B cell (primary cell): ENCODE measurements at regions of chr12 and their contacts with region 1.

Region 1: DNA sequence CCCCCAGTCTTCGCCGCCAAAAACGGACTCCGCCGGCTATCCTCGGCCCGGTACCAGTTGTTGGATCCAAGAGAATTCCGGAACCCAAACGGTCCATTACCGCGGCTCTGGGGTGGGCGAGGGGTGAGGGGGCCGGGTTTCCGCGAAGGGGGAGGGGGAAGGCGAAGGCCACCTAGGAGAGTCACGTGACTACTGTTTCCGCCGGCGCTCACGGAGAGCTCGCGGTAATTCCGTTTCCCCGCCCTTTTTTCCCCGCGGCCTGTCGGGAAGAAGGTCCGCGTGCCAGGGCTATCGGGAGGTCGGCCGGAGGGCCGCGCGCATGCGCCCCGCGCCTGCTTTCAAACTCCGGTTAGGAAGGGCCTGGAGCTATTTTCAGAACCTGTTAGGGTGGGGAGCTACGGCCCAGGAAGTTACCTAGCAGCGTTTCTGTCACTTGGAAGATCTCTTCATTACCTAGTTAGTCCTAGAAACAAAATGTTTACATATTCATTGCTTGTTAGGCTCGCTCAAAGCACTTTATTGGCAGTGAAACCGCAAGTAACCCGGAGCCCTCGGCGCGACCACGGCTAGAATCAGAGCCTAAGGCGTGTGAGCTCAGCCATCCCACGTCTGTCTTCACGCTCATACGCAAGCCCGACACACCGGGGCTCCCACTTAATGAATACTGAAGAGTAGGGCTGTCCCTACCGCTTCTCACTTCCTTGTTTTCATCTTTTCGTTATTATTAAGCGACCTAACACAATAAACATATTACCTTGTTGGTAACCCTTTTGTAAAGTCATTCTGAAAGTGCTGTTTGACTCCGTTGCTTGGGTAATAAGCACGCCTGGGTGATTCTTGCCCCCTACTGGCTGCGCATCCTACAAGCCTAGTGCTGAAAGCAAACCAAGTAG is 624 bp upstream of the SBNO1 start:
- DNase-seq: peak; percentile 99
- ATAC-seq: peak; percentile 70
- H3K4me3 ChIP-seq: peak overlapping the region; percentile 68 to 90 (median 80)
- H3K4me3 Mint-ChIP-seq: peak overlapping the region; percentile 87
- H3K27ac ChIP-seq: peak overlapping the region; percentile 99
- H3K27ac Mint-ChIP-seq: peak overlapping the region; percentile 95
- H3K4me1 ChIP-seq: peaks cover 17 to 23% of the 10 kb centered on the region in 2 donors
- H3K4me1 Mint-ChIP-seq: peaks cover 16% of the 10 kb centered on the region
- H3K27me3 ChIP-seq: no peaks in the 10 kb centered on the region
- H3K27me3 Mint-ChIP-seq: no peaks in the 10 kb centered on the region
- CTCF ChIP-seq: peak; percentile 84

Region 2: DNA sequence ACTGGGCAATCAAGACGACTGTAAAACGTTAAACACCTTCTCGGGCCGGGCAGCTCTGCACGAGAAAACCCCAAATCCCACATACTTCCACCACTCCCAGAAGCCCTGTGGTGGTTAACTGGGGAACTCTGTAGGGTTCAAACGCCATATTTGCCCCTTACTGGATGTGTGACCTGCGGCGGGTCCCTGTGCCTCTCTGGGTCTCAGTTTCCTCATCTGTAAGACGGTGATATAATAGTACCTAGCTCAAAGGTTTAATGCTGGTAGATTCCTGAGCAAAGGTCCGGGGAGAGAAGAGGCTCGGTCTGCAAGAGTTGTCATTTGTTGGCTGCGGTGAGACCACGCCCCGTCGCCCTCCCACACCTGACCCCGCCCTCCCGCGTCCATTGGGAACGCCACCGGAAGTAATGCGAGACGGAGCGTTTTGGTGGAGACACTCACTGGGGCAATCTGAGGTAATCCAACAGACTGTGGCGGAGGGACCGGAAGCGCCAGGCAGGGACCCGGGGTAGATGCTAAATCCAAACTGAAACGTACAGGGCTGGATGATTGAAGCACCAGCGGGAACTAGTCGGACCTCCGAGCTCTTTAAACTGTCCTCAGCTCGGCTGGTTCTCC is 390.9 kb before region 1 on chr12:
- CTCF ChIA-PET with region 1: no interaction called
- POLR2A ChIA-PET with region 1: no interaction called
- intact Hi-C with region 1: loop called (anchors 1 kb)
- DNase-seq: peak; percentile 98
- ATAC-seq: peak; percentile 89
- H3K4me3 ChIP-seq: peak overlapping the region; percentile 76 to 97 (median 90)
- H3K4me3 Mint-ChIP-seq: peak overlapping the region; percentile 100
- H3K27ac ChIP-seq: peak overlapping the region; percentile 91 to 99
- H3K27ac Mint-ChIP-seq: peak overlapping the region; percentile 98
- H3K4me1 ChIP-seq: peaks cover 19 to 36% of the 10 kb centered on the region in 2 donors
- H3K4me1 Mint-ChIP-seq: peaks cover 32% of the 10 kb centered on the region
- H3K27me3 ChIP-seq: no peaks in the 10 kb centered on the region
- H3K27me3 Mint-ChIP-seq: no peaks in the 10 kb centered on the region
- CTCF ChIP-seq: no peak

Region 3: DNA sequence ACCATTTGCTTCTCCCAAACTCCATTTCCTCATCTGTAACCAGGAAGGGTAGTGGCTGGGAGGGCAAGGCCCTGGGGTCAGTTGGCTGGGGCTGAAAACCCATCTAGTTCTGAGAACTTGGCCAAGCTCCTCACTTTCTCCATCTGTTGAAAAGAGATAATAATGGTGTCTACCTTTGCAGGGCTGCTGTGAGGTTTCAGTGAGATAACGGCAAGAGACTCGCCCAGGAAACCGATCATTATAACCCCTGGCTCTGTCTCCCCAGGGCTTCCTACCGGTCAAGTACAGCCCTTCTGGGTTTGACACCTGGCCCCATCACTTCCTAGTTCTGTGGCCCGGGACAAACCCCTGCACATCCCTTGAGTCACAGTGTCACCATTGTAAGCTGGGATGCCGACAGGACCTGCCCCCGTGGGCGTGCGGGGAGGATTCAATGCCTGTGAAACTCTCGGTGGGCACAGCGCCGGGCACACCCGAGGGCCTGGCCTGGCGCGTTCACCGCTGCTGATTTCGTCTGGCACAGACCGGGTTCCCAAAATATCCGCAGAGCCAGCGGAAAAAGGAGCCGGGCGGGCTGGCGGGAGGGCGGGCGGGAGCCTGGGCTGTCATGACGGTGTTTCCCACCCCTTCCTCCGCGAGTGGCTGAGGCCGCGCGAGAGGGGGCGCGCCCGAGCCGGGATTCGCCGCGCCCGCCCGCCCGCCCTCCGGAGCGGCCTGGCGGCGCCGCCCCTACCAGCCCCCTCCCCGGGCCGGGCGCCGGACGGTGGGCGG is 23.1 kb after region 1 on chr12:
- CTCF ChIA-PET with region 1: interaction called, 17 read pairs
- POLR2A ChIA-PET with region 1: interaction called, 14 read pairs
- intact Hi-C with region 1: loop called (anchors 1 kb)
- DNase-seq: peak; percentile 85
- ATAC-seq: peak; percentile 62
- H3K4me3 ChIP-seq: peak overlapping the region; percentile 60 to 78 (median 63)
- H3K4me3 Mint-ChIP-seq: peak overlapping the region; percentile 91
- H3K27ac ChIP-seq: peak overlapping the region; percentile 74 to 80
- H3K27ac Mint-ChIP-seq: peak overlapping the region; percentile 93
- H3K4me1 ChIP-seq: peaks cover 22 to 36% of the 10 kb centered on the region in 2 donors
- H3K4me1 Mint-ChIP-seq: peaks cover 38% of the 10 kb centered on the region
- H3K27me3 ChIP-seq: no peaks in the 10 kb centered on the region
- H3K27me3 Mint-ChIP-seq: no peaks in the 10 kb centered on the region
- CTCF ChIP-seq: peak; percentile 9

Region 4: DNA sequence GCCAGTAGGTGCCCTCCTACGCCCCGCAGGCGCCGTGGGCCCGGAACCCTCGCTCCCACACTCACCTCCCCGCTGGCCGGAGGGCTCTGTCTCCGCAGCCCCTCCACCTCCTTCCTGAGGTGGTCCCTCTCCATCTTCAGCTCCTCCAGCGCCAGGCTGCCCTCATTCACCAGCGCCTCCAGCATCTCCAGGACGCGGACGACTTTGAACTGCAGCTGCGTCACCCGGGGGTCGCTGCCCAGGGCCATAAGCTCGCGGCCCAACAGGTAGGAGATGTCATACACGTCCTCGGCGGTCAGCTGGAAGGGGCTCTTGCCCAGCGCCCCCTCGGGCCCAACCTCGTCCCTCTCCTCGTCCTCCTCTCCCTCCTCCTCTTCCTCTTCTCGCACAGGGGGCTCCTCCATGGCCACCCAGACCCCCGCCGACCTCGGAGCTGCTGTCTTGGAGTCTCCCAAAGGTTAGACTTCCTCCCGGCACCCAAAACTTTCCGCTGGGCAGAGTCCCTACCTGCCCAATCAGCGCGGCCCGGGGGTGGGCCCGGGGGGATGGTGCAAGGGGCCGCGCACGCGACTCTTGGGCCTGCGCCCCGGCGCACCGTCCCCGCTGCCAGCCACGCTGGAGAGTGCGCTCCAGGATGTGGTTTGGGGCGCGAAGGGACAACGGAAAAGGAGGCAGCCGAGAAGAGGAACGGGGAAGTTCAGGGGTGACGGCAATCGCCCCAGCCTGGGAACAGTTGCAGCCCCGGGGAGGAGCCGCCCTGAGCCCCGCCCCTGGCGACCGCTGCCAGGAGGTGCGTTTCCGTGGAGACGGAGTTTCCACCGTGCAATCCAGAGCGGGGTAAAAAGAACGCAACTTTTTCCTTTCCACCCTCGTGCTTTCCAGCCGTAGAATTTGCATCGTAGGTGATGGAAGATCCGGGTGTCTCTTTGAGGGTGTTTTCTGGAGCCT is 71.0 kb after region 1 on chr12 and contains the start of gene RILPL2:
- CTCF ChIA-PET with region 1: interaction called, 3 read pairs
- POLR2A ChIA-PET with region 1: interaction called, 6 read pairs
- intact Hi-C with region 1: loop called (anchors 1 kb)
- DNase-seq: peak; percentile 93
- ATAC-seq: peak; percentile 86
- H3K4me3 ChIP-seq: peak within 1 kb of the TSS; percentile 79 to 99 (median 97)
- H3K4me3 Mint-ChIP-seq: peak within 1 kb of the TSS; percentile 96
- H3K27ac ChIP-seq: peak within 1 kb of the TSS; percentile 91 to 95
- H3K27ac Mint-ChIP-seq: peak within 1 kb of the TSS; percentile 96
- H3K4me1 ChIP-seq: peaks cover 30 to 46% of the 10 kb centered on the region in 2 donors
- H3K4me1 Mint-ChIP-seq: peaks cover 47% of the 10 kb centered on the region
- H3K27me3 ChIP-seq: no peaks in the 10 kb centered on the region
- H3K27me3 Mint-ChIP-seq: no peaks in the 10 kb centered on the region
- CTCF ChIP-seq: no peak
- total RNA-seq, gene RILPL2: 12.6 and 13.0 TPM in 2 replicates

Region 5: GRCh38 chr12:123580772-123581171 is 215.5 kb after region 1 on chr12:
- CTCF ChIA-PET with region 1: interaction called, 3 read pairs
- POLR2A ChIA-PET with region 1: interaction called, 5 read pairs
- intact Hi-C with region 1: loop called (anchors 1 kb)
- DNase-seq: no peak
- ATAC-seq: no peak
- H3K4me3 ChIP-seq: no peak overlapping the region
- H3K4me3 Mint-ChIP-seq: no peak overlapping the region
- H3K27ac ChIP-seq: no peak overlapping the region
- H3K27ac Mint-ChIP-seq: no peak overlapping the region
- H3K4me1 ChIP-seq: peaks cover 21 to 27% of the 10 kb centered on the region in 2 donors
- H3K4me1 Mint-ChIP-seq: peaks cover 23% of the 10 kb centered on the region
- H3K27me3 ChIP-seq: no peaks in the 10 kb centered on the region
- H3K27me3 Mint-ChIP-seq: no peaks in the 10 kb centered on the region
- CTCF ChIP-seq: no peak

Region 6: DNA sequence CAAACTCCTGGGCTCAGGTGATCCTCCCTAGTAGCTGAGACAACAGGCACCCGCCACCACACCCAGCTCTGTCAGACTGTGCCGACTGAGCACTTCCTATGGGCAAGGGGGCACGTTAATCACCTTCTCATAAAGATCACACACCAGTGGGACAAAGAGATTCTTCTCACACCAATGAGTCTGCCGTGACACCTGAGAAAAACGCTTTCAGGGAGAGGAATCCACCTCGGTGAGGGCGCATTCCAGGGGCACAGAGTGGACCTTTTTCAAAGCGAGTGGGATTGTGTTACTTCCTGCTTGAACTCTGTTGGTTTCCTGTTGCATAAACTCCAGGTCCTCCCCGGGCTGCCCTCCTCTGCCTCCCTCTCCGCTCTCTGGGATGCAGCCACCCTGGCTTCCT is 1515.9 kb after region 1 on chr12:
- CTCF ChIA-PET with region 1: no interaction called
- POLR2A ChIA-PET with region 1: no interaction called
- intact Hi-C with region 1: no loop called
- DNase-seq: peak; percentile 9
- ATAC-seq: no peak
- H3K4me3 ChIP-seq: no peak overlapping the region
- H3K4me3 Mint-ChIP-seq: no peak overlapping the region
- H3K27ac ChIP-seq: no peak overlapping the region
- H3K27ac Mint-ChIP-seq: peak overlapping the region; percentile 26
- H3K4me1 ChIP-seq: peaks cover 47 to 53% of the 10 kb centered on the region in 2 donors
- H3K4me1 Mint-ChIP-seq: peaks cover 48% of the 10 kb centered on the region
- H3K27me3 ChIP-seq: peaks cover 0 to 3% (median 0%) of the 10 kb centered on the region in 4 experiments
- H3K27me3 Mint-ChIP-seq: no peaks in the 10 kb centered on the region
- CTCF ChIP-seq: no peak